K562 (cell line): ENCODE measurements at regions of chr4 and their contacts with region 1.

Region 1: DNA sequence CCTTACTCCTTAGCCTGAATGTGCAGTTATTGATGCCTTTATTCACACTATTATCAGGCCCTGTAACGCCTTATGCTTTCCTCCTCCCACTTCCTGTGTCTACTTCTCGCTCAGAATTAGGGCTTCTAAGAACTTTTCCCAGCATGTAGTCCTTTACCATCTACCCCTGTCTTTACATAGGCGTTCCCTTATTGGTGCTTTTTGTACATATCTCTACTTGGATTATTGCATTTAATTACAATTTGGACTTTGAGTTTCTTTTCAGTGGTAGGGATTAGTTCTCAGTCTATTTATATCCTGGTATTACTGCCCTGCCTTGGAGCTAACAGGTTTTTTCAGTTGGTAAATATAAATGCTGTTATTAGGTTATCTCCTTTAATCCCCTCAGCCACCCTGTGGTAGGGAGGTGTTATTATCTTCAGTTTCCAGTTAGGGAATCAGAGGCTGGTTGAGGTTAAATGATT is 84.0 kb downstream of the RBPJ start:
- DNase-seq: peak in 2 of 4 experiments; percentile 23
- ATAC-seq: no peak
- H3K4me3 ChIP-seq: no peak overlapping the region
- H3K27ac ChIP-seq: no peak overlapping the region
- H3K4me1 ChIP-seq: no peaks in the 10 kb centered on the region
- H3K27me3 ChIP-seq: no peaks in the 10 kb centered on the region
- CTCF ChIP-seq: no peak
- EP300 ChIP-seq: no peak
- POLR2A ChIP-seq: no peak
- RAD21 ChIP-seq: no peak

Region 2: GRCh38 chr4:26069218-26069617 is 335.6 kb before region 1 on chr4:
- CTCF ChIA-PET with region 1: no interaction called
- POLR2A ChIA-PET with region 1: no interaction called
- in situ Hi-C with region 1: loop called (anchors 25 kb)
- intact Hi-C with region 1: loop called (anchors 5 kb)
- DNase-seq: peak; percentile 23 to 45 (median 34)
- ATAC-seq: peak; percentile 87
- H3K4me3 ChIP-seq: no peak overlapping the region
- H3K27ac ChIP-seq: no peak overlapping the region
- H3K4me1 ChIP-seq: peaks cover 0 to 2% of the 10 kb centered on the region in 2 experiments; a peak in 1 of 5 replicates
- H3K27me3 ChIP-seq: peaks cover 2 to 21% of the 10 kb centered on the region in 2 experiments; a peak in 2 of 5 replicates
- CTCF ChIP-seq: peak; percentile 28 to 51 (median 45); a peak in 5 of 6 replicates
- EP300 ChIP-seq: no peak
- POLR2A ChIP-seq: no peak
- RAD21 ChIP-seq: peak in 1 of 2 experiments; percentile 46; a peak in 2 of 4 replicates